GM12878 (cell line): ENCODE measurements at regions of chr6 and their contacts with region 1.

Region 1: DNA sequence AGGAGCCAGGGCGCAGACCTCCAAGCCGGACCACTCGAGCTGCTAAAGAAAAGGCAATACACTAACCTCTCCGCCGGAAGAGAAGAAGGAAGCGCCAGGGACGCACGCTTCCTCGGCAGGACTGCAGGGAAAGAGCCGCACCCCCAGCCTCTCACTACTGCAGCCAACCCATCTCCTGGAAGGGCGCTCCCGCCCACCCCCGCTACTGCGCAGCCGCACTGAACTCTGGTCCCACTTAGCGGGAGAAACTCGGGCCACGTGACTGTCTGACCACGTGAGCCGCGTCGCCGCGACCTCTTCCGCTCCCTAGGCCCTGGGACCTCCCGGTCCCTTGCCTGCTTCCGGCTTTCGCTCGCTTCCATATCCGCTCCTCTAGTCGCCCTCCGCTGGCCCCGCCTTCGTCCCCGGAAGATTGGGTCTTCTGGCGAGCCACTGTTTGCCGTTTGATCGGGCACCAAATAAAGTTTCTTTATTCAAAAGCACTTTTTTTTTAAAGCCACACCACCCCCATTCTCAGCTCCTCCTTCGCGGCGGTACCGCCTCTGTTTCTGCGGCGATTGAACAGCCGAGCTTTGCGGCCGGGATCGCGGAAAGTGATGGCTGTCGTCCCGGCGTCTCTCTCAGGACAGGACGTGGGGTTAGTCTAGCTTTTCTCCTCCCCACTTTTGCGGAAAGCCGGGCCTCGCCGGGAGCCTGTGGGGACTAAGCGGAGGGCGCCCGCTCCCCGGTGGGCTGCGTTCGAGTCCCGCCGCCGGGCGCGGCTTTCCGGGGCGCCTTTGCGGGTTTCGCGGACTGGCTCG is at the start of gene RMND1:
- DNase-seq: peak; percentile 99
- ATAC-seq: peak; percentile 97
- H3K4me3 ChIP-seq: peak within 1 kb of the TSS; percentile 85
- H3K27ac ChIP-seq: peak within 1 kb of the TSS; percentile 89
- H3K4me1 ChIP-seq: peaks cover 3% of the 10 kb centered on the region
- H3K27me3 ChIP-seq: no peaks in the 10 kb centered on the region
- CTCF ChIP-seq: no peak
- EP300 ChIP-seq: peak in 1 of 2 experiments; percentile 33; a peak in 2 of 4 replicates
- POLR2A ChIP-seq: peak; percentile 87
- RAD21 ChIP-seq: no peak
- polyA plus RNA-seq, gene RMND1: 18.9 to 24.0 TPM

Region 2: GRCh38 chr6:151390276-151391032 is 61.7 kb before region 1 on chr6:
- CTCF ChIA-PET with region 1: interaction called, 3 read pairs
- POLR2A ChIA-PET with region 1: interaction called, 23 read pairs
- RAD21 ChIA-PET with region 1: interaction called, 11 read pairs
- SMC1A ChIA-PET with region 1: interaction called, 9 read pairs
- in situ Hi-C with region 1: no loop called
- intact Hi-C with region 1: loop called (anchors 1 kb)
- DNase-seq: peak; percentile 94
- ATAC-seq: peak; percentile 87
- H3K4me3 ChIP-seq: peak overlapping the region; percentile 82; the same call in 1 of the 2 replicates
- H3K27ac ChIP-seq: peak overlapping the region; percentile 95
- H3K4me1 ChIP-seq: peaks cover 29% of the 10 kb centered on the region
- H3K27me3 ChIP-seq: no peaks in the 10 kb centered on the region
- CTCF ChIP-seq: no peak
- EP300 ChIP-seq: no peak
- POLR2A ChIP-seq: peak; percentile 88
- RAD21 ChIP-seq: no peak